Endothelial cell of umbilical vein (primary cell): ENCODE measurements at regions of chr2 and their contacts with region 1.

Region 1: DNA sequence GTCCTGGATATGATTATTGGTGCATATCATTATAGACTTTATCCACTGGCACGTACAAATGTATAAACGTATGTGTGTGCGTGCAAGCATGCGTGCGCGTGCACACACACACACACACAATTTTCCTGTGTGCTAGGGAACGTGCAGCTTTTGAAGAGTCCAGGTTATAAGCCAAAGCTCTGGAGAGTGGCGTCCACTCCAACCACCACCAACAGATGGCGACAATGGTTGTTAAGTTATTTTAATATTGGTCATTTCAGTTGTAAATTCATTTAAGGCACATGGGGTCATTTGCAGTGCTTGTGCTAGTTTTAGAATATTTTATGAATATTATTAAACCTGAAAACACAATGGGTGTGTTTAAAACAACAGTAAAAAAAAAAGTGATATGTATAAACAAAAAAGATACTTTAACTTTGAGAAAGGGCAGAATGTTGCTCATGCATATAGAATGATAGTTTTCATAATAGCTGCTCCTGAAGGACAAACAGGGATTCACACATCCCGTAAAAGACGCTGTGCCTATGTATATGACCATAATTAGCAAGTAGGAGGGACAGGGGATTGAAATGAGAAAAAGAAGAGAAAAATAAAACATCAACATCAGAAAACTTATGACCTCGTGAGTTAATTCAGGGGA is 124.2 kb upstream of the ITGB6 start:
- DNase-seq: peak; percentile 74
- H3K4me3 ChIP-seq: no peak overlapping the region
- H3K27ac ChIP-seq: no peak overlapping the region
- H3K4me1 ChIP-seq: no peaks in the 10 kb centered on the region
- H3K27me3 ChIP-seq: no peaks in the 10 kb centered on the region
- CTCF ChIP-seq: peak; percentile 63
- POLR2A ChIP-seq: no peak

Region 2: DNA sequence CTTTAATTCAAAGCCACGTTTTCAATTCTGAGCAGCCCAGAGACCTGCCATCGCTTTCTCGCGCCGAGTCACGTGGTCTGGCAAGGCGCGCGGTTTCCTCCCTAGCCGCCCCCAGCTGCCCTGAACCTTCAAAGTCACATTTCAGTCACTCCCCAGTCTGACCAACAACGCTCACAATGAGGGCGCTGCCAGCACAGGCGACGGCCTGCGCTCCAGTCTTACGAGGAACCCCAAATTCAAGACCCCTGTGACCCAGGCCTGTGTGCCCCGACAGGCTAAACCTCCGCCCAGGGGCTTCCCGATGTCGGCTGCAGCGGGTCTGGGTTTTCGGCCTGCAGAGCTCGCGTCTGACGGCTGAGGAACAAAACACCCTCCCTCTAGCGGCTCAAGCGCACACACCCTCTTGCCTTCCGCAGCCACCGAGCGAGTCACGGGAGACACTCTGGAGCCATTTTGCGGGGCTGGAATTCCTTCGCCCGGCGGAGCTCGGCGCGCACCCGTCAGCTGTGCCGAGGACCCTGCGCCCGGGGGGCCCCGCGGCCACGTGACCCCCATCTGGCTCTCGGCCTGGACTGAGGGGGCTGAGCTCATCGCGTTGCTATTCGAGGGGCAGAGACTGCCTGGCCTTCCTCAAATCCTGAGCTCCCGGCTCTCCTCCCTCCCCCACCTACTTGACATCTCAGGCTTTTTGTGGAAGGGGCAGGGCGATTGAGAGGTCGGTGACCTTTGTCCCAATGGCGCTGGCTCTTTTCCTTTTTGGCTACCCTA is 54.3 kb before region 1 on chr2:
- CTCF ChIA-PET with region 1: interaction called, 11 read pairs
- POLR2A ChIA-PET with region 1: no interaction called
- dilution Hi-C with region 1: no loop called
- intact Hi-C with region 1: no loop called
- DNase-seq: peak; percentile 92
- H3K4me3 ChIP-seq: peak overlapping the region in 2 of 3 experiments; percentile 34 to 44
- H3K27ac ChIP-seq: peak overlapping the region; percentile 93
- H3K4me1 ChIP-seq: peaks cover 25% of the 10 kb centered on the region
- H3K27me3 ChIP-seq: no peaks in the 10 kb centered on the region
- CTCF ChIP-seq: peak; percentile 65 to 79
- POLR2A ChIP-seq: peak; percentile 76

Region 3: DNA sequence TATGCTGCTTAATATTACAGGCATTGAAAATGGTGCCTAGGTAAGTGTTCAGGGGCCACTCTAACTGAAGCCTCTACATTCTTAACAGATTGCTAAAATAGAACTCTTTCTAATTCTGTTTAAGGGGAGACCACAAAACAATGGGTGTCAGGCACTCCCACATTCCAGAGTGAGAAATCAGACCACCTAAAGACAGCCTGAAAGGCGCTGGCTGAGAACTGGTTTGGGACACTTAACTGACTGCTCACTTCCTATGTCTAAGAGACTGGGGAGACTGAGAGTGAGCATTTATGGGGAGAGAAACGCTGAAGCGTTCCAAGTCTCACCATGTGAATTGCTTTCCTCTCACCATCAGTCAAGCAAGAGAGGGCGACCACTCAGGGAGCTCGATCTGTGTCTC is 15.4 kb before region 1 on chr2:
- CTCF ChIA-PET with region 1: interaction called, 30 read pairs
- POLR2A ChIA-PET with region 1: interaction called, 4 read pairs
- dilution Hi-C with region 1: no loop called
- intact Hi-C with region 1: no loop called
- DNase-seq: peak; percentile 50
- H3K4me3 ChIP-seq: no peak overlapping the region
- H3K27ac ChIP-seq: peak overlapping the region; percentile 88
- H3K4me1 ChIP-seq: peaks cover 22% of the 10 kb centered on the region
- H3K27me3 ChIP-seq: no peaks in the 10 kb centered on the region
- CTCF ChIP-seq: no peak
- POLR2A ChIP-seq: no peak

Region 4: GRCh38 chr2:160493227-160494028 is 169.1 kb after region 1 on chr2 and contains the start of gene RBMS1:
- CTCF ChIA-PET with region 1: interaction called, 3 read pairs
- POLR2A ChIA-PET with region 1: interaction called, 7 read pairs
- dilution Hi-C with region 1: no loop called
- intact Hi-C with region 1: loop called (anchors 2 kb)
- DNase-seq: no peak
- H3K4me3 ChIP-seq: peak within 1 kb of the TSS; percentile 98 to 100 (median 99)
- H3K27ac ChIP-seq: peak within 1 kb of the TSS; percentile 89
- H3K4me1 ChIP-seq: peaks cover 25% of the 10 kb centered on the region
- H3K27me3 ChIP-seq: no peaks in the 10 kb centered on the region
- CTCF ChIP-seq: no peak
- POLR2A ChIP-seq: no peak
- total RNA-seq, gene RBMS1: 93.3 and 94.8 TPM in 2 replicates

Region 5: GRCh38 chr2:160596441-160596840 is 272.2 kb after region 1 on chr2:
- CTCF ChIA-PET with region 1: no interaction called
- POLR2A ChIA-PET with region 1: no interaction called
- dilution Hi-C with region 1: no loop called
- intact Hi-C with region 1: no loop called
- DNase-seq: no peak
- H3K4me3 ChIP-seq: no peak overlapping the region
- H3K27ac ChIP-seq: no peak overlapping the region
- H3K4me1 ChIP-seq: no peaks in the 10 kb centered on the region
- H3K27me3 ChIP-seq: no peaks in the 10 kb centered on the region
- CTCF ChIP-seq: no peak
- POLR2A ChIP-seq: no peak

Region 6: GRCh38 chr2:160994141-160995002 is 670.1 kb after region 1 on chr2:
- CTCF ChIA-PET with region 1: interaction called, 67 read pairs
- POLR2A ChIA-PET with region 1: no interaction called
- dilution Hi-C with region 1: no loop called
- intact Hi-C with region 1: loop called (anchors 5 kb)
- DNase-seq: peak; percentile 86
- H3K4me3 ChIP-seq: no peak overlapping the region
- H3K27ac ChIP-seq: no peak overlapping the region
- H3K4me1 ChIP-seq: peaks cover 2% of the 10 kb centered on the region
- H3K27me3 ChIP-seq: no peaks in the 10 kb centered on the region
- CTCF ChIP-seq: peak; percentile 58 to 70
- POLR2A ChIP-seq: no peak